Astrocyte of the cerebellum (primary cell): ENCODE measurements at regions of chr7 and their contacts with region 1.

Region 1: DNA sequence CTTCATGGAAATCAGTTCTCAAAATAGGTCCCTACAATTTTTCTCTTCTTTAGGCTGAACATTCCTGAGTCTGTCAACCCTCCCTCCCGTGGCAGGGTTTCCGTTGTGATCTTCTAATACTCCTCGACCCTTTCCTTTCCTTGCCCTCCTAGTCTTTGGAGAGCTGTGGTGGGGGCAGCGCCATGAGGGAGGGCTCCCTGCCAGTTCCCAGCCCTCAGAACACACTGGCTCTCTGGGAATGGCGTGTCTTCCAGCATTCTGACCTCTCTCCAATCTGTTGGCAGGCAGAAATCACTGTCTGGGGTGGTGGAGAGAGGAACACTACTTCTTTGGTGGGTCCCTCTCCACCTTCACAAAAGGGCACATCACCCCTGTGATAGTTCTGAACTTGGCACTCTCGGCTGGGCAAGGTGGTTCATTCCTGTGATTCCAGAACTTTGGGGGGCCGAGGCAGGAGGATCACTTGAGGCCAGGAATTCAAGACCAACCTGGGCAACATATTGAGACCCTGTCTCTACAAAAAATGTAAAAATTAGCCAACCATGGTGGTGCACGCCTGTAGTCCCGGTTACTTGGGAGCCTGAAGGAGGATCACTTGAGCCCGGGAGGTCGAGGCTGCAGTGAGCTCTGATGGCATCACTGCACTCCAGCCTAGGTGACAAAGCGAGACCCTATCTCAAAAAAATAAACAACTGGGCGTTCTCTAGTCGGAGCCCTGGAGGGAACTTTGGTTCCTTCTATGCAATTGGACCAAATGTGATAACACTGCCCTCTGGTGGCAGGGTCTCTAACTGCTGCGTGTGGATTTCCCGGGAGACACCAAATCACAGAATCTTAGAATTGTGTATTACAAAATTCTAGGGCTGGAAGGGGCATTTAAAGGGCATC is 13.1 kb upstream of the ARPC1A start:
- DNase-seq: peak; percentile 40
- H3K4me3 ChIP-seq: no peak overlapping the region
- CTCF ChIP-seq: peak; percentile 89

Region 2: DNA sequence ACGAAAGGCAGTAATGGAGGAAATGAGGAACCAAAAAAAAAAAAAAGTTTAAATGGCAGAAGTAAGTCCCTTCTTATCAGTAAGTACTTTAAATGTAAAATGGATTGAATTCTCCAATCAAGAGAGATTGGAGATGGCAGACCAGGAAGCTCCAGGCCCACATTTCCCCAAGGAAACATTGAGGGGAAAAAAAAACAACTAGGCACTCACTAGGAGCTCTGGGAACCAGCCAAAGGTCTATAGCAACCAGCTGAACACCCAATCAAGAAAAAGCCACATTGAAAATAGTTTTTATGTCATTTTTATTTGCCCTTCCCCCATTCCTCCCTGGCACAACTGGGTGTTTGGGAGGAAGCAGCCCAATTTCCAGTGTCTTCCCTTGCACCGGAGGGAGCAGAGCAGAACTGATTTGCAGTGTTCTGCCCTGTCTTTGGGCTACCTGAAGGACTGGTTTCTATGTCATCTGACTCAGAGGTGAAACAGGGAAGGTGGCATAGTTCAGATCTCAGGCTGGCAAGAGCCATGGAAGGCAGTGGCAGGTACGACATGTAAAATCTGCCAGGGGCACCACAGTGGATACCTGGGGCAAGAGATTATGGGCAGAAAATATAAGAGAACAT is 290.5 kb before region 1 on chr7:
- in situ Hi-C with region 1: loop called (anchors 25 kb)
- DNase-seq: no peak
- H3K4me3 ChIP-seq: no peak overlapping the region
- CTCF ChIP-seq: no peak

Region 3: GRCh38 chr7:99525713-99526440 is 213.3 kb after region 1 on chr7:
- in situ Hi-C with region 1: no loop called
- DNase-seq: no peak
- H3K4me3 ChIP-seq: no peak overlapping the region
- CTCF ChIP-seq: peak; percentile 17